Activated CD4-positive, alpha-beta memory T cell treated with anti-CD3 and anti-CD28 coated beads for 36 hours (primary cell): ENCODE measurements at regions of chr1 and their contacts with region 1.

Region 1: GRCh38 chr1:209692745-209693504 is 11.7 kb upstream of the HSD11B1 start:
- DNase-seq: peak; percentile 83
- H3K4me3 Mint-ChIP-seq: peak overlapping the region; percentile 22
- H3K27ac Mint-ChIP-seq: peak overlapping the region; percentile 7
- H3K4me1 Mint-ChIP-seq: peaks cover 61% of the 10 kb centered on the region
- H3K27me3 Mint-ChIP-seq: no peaks in the 10 kb centered on the region

Region 2: GRCh38 chr1:209576798-209577197 is 116.1 kb before region 1 on chr1:
- CTCF ChIA-PET with region 1: interaction called, 44 read pairs
- POLR2A ChIA-PET with region 1: no interaction called
- intact Hi-C with region 1: loop called (anchors 1 kb)
- DNase-seq: peak; percentile 82
- H3K4me3 Mint-ChIP-seq: no peak overlapping the region
- H3K27ac Mint-ChIP-seq: no peak overlapping the region
- H3K4me1 Mint-ChIP-seq: no peaks in the 10 kb centered on the region
- H3K27me3 Mint-ChIP-seq: peaks cover 2% of the 10 kb centered on the region

Region 3: GRCh38 chr1:209627732-209628196 is 65.2 kb before region 1 on chr1:
- CTCF ChIA-PET with region 1: interaction called, 10 read pairs
- POLR2A ChIA-PET with region 1: no interaction called
- intact Hi-C with region 1: no loop called
- DNase-seq: peak; percentile 88
- H3K4me3 Mint-ChIP-seq: no peak overlapping the region
- H3K27ac Mint-ChIP-seq: no peak overlapping the region
- H3K4me1 Mint-ChIP-seq: peaks cover 14% of the 10 kb centered on the region
- H3K27me3 Mint-ChIP-seq: no peaks in the 10 kb centered on the region

Region 4: GRCh38 chr1:209674957-209675564 is 17.9 kb before region 1 on chr1 and contains the start of gene G0S2:
- CTCF ChIA-PET with region 1: interaction called, 15 read pairs
- POLR2A ChIA-PET with region 1: no interaction called
- intact Hi-C with region 1: no loop called
- DNase-seq: peak; percentile 66
- H3K4me3 Mint-ChIP-seq: peak within 1 kb of the TSS; percentile 76
- H3K27ac Mint-ChIP-seq: peak within 1 kb of the TSS; percentile 68
- H3K4me1 Mint-ChIP-seq: peaks cover 68% of the 10 kb centered on the region
- H3K27me3 Mint-ChIP-seq: peaks cover 22% of the 10 kb centered on the region
- total RNA-seq, gene G0S2: 92.7 to 93.1 TPM

Region 5: DNA sequence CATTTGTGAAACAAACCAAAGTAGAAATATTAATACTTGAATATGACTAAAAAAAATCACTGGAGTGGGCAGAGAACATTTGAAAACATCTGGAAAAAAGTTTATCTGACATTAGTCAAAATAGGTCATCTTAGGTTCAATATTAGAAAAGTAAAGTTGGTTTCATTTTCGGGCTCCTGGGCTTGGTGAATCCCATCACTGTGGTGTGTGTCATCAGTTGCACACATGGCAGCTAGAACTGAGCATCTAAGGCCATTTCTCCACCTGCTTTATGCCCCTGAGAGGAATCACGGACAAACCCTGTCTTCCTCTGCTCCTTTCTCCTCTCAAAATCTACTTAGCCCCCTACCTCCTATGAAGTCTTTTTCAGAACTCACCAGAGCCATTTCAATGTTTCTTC is 17.2 kb after region 1 on chr1:
- CTCF ChIA-PET with region 1: interaction called, 10 read pairs
- POLR2A ChIA-PET with region 1: interaction called, 3 read pairs
- intact Hi-C with region 1: loop called (anchors 2 kb)
- DNase-seq: peak; percentile 62
- H3K4me3 Mint-ChIP-seq: peak overlapping the region; percentile 60
- H3K27ac Mint-ChIP-seq: peak overlapping the region; percentile 91
- H3K4me1 Mint-ChIP-seq: peaks cover 76% of the 10 kb centered on the region
- H3K27me3 Mint-ChIP-seq: no peaks in the 10 kb centered on the region

Region 6: DNA sequence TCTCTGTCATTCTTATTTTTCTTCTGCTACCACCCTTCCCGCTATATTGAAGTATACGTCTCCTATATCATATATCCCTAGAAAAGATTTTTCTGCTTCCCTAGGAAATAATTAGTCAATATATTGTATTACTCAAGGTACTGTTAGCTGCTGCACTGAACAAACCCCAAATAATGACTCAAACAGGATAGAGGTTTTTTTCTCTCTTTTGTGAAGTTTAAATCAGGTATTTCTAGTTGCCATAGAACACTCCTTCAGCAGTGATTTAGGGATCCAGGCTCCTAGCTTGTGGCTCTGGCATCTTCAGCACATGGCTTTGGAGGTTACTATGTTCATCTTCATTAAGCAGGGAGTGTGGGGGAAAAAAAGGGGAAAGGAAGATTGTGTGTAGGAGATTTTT is 263.2 kb after region 1 on chr1:
- CTCF ChIA-PET with region 1: no interaction called
- POLR2A ChIA-PET with region 1: no interaction called
- intact Hi-C with region 1: no loop called
- DNase-seq: no peak
- H3K4me3 Mint-ChIP-seq: no peak overlapping the region
- H3K27ac Mint-ChIP-seq: no peak overlapping the region
- H3K4me1 Mint-ChIP-seq: no peaks in the 10 kb centered on the region
- H3K27me3 Mint-ChIP-seq: peaks cover 18% of the 10 kb centered on the region